Common myeloid progenitor, CD34-positive (primary cell): ENCODE measurements at regions of chr3 and their contacts with region 1.

Region 1: DNA sequence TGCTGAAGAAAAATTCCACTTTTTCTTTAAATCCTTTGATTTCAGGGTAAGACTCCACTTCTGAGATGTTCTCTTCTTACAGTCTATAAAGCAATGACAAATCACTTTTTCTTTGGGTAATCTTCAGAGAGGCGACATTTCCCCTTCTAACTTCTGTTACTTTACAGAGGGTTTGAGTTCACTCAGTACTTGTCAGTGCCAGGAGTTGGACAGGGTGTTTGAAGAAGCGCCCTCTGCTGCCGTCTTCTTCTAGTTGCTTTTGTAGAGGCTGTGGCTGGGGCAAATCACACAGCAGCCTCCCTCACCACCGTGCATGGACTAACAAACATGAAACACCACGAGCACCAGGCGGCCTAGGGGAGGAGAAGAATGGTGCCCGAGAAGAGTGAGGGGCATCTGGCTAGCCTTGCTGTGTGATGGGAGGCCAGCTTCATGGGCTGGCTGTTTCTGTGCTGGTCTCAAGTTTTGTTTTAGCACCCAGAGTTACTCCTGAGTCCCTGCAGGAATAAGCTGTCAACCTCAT is at the start of gene CD80:
- DNase-seq: peak; percentile 80 to 91 (median 90)
- H3K4me3 ChIP-seq: peak within 1 kb of the TSS in 1 of 7 experiments; percentile 31
- H3K27ac ChIP-seq: peak within 1 kb of the TSS in 1 of 2 experiments; percentile 16
- H3K4me1 ChIP-seq: peaks cover 0 to 32% (median 26%) of the 10 kb centered on the region in 4 experiments
- H3K27me3 ChIP-seq: no peaks in the 10 kb centered on the region

Region 2: DNA sequence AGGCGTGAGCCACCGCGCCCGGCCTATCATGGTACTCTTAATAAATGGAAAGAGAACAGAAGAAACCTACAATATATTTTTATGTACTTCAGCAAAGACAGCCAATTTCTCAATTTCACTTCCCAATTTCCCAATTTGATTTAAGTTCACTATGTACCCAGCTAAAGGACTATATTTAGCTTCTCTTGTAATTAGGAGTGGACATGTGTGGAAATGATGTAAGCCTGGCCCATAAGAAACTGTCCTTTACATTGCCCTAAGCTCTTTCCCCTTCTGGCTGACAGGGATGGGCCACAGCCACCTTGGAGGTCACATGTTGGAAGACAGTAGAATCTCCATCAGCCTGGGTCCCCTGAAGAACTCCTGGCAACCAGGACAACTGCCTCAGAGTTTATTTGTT is 102.3 kb before region 1 on chr3:
- CTCF ChIA-PET with region 1: no interaction called
- POLR2A ChIA-PET with region 1: no interaction called
- DNase-seq: no peak
- H3K4me3 ChIP-seq: no peak overlapping the region
- H3K27ac ChIP-seq: no peak overlapping the region
- H3K4me1 ChIP-seq: peaks cover 0 to 8% (median 3%) of the 10 kb centered on the region in 4 experiments
- H3K27me3 ChIP-seq: no peaks in the 10 kb centered on the region

Region 3: GRCh38 chr3:119524931-119525662 is 34.4 kb before region 1 on chr3:
- CTCF ChIA-PET with region 1: interaction called, 11 read pairs
- POLR2A ChIA-PET with region 1: no interaction called
- DNase-seq: peak; percentile 47 to 57 (median 56)
- H3K4me3 ChIP-seq: peak overlapping the region in 1 of 7 experiments; percentile 2
- H3K27ac ChIP-seq: no peak overlapping the region
- H3K4me1 ChIP-seq: peaks cover 0 to 3% (median 0%) of the 10 kb centered on the region in 4 experiments
- H3K27me3 ChIP-seq: no peaks in the 10 kb centered on the region